ENCODE measurements at regions of chr5 and their contacts with region 1.

Region 1: GRCh38 chr5:61837788-61838187 is 468.2 kb upstream of the KIF2A start:
- DNase-seq: no peak
- H3K4me3 ChIP-seq: no peak overlapping the region
- H3K4me3 Mint-ChIP-seq: no peak overlapping the region
- H3K27ac Mint-ChIP-seq: no peak overlapping the region
- H3K4me1 ChIP-seq: no peaks in the 10 kb centered on the region
- H3K4me1 Mint-ChIP-seq: no peaks in the 10 kb centered on the region
- H3K27me3 ChIP-seq: no peaks in the 10 kb centered on the region
- H3K27me3 Mint-ChIP-seq: peaks cover 32% of the 10 kb centered on the region
- CTCF ChIP-seq: no peak

Region 2: GRCh38 chr5:61790678-61791077 is 47.1 kb before region 1 on chr5:
- CTCF ChIA-PET with region 1: no interaction called
- POLR2A ChIA-PET with region 1: no interaction called
- intact Hi-C with region 1: loop called (anchors 5 kb)
- DNase-seq: peak; percentile 48 to 79
- H3K4me3 ChIP-seq: no peak overlapping the region
- H3K4me3 Mint-ChIP-seq: no peak overlapping the region
- H3K27ac Mint-ChIP-seq: no peak overlapping the region
- H3K4me1 ChIP-seq: peaks cover 9% of the 10 kb centered on the region; the same call in 1 of the 2 replicates
- H3K4me1 Mint-ChIP-seq: peaks cover 7% of the 10 kb centered on the region
- H3K27me3 ChIP-seq: no peaks in the 10 kb centered on the region
- H3K27me3 Mint-ChIP-seq: peaks cover 3% of the 10 kb centered on the region
- CTCF ChIP-seq: no peak

Region 3: GRCh38 chr5:61809651-61810050 is 28.1 kb before region 1 on chr5:
- CTCF ChIA-PET with region 1: no interaction called
- POLR2A ChIA-PET with region 1: no interaction called
- intact Hi-C with region 1: no loop called
- DNase-seq: no peak
- H3K4me3 ChIP-seq: no peak overlapping the region
- H3K4me3 Mint-ChIP-seq: no peak overlapping the region
- H3K27ac Mint-ChIP-seq: no peak overlapping the region
- H3K4me1 ChIP-seq: peaks cover 8% of the 10 kb centered on the region; the same call in 1 of the 2 replicates
- H3K4me1 Mint-ChIP-seq: peaks cover 9% of the 10 kb centered on the region
- H3K27me3 ChIP-seq: no peaks in the 10 kb centered on the region
- H3K27me3 Mint-ChIP-seq: peaks cover 13% of the 10 kb centered on the region
- CTCF ChIP-seq: no peak

Measured in Caco-2 (cell line).